AG04450 (cell line): ENCODE measurements at regions of chr15 and their contacts with region 1.

Region 1: DNA sequence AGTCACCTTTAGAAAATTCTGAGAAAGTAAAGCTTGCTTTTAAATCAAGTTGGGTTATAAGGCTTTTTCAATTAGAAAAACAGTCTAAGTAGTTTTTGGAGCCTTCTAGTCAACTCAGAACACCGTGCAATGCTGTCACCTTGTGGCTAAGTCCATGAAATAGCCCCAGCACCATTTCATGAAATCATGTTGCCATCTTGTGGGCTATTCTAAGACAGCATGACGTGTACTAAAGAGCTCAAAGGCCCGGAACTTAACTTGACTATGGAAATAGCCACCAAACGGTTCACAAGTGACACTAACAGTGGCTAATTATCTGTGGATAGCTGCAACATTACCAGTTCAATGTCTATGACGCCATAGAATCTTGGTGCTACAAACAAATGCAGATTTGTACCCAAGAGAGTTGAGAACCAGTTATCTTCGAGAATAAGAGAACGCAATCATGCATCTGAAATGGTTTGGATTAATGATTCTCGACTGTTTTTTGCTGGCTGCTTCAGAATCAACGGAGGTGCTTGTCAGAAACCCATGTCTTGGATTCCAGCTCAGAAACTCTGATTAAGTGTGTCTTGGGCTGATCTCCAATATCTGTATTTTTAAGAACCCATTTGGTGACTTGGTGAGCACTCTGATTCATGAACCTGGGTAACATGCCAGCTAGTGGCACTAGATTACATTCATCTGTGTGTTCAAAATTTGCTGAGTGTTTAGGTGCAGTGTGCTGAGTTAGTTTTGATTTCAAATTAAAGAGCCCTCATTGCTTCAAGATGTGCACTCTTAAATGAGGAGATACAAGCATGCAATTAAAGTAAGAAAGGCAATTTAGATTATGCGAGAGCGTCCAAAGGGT is 111.2 kb upstream of the MCTP2 start:
- DNase-seq: peak; percentile 84
- H3K4me3 ChIP-seq: no peak overlapping the region
- H3K27ac ChIP-seq: no peak overlapping the region
- H3K27me3 ChIP-seq: no peaks in the 10 kb centered on the region
- CTCF ChIP-seq: peak; percentile 100

Region 2: DNA sequence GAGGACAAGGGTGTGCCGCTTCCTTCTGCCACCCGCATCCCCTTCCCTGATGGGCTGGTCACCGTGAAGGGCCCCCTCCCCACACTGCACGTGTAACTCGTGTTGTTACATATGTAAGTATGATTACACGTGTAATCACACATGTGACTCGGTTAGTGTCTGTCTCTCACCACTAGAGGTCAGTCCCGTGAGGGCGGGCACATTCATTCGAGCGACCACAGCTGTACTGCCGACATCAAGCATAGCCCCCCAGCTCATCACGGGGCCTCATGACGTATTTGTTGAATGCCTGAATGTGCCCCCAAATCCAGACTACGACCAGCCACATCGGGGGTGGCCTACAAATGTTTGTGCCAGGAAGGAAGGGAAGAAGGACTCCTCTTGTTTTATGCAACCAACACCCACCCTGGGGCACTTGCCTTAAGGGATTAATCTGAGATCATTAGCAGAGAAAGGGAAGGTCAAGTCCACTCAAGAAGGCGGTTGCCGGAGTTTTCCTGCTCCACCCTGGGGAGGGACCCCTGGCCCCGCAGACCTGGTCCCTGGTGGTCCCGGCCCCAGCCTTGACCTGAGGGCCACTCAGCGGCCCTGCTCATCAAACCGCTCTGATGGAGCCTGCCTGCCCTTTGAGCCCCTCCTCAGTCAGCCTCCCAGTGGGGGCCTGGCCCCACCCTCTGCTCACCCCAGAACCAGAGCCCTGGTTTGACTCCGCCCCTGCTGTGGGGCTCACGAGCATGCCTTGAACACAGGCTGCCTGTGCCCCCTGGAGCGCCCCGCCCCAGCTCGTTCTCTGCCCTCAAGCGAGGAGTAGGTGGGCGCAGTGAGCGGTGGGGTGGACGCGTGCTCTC is 1084.0 kb before region 1 on chr15:
- CTCF ChIA-PET with region 1: interaction called, 75 read pairs
- POLR2A ChIA-PET with region 1: interaction called, 3 read pairs
- DNase-seq: no peak
- H3K4me3 ChIP-seq: no peak overlapping the region
- H3K27ac ChIP-seq: no peak overlapping the region
- H3K27me3 ChIP-seq: no peaks in the 10 kb centered on the region
- CTCF ChIP-seq: peak; percentile 59

Region 3: GRCh38 chr15:93982226-93982727 is 137.9 kb before region 1 on chr15:
- CTCF ChIA-PET with region 1: interaction called, 44 read pairs
- POLR2A ChIA-PET with region 1: no interaction called
- DNase-seq: no peak
- H3K4me3 ChIP-seq: no peak overlapping the region
- H3K27ac ChIP-seq: no peak overlapping the region
- H3K27me3 ChIP-seq: peaks cover 2% of the 10 kb centered on the region
- CTCF ChIP-seq: no peak

Region 4: DNA sequence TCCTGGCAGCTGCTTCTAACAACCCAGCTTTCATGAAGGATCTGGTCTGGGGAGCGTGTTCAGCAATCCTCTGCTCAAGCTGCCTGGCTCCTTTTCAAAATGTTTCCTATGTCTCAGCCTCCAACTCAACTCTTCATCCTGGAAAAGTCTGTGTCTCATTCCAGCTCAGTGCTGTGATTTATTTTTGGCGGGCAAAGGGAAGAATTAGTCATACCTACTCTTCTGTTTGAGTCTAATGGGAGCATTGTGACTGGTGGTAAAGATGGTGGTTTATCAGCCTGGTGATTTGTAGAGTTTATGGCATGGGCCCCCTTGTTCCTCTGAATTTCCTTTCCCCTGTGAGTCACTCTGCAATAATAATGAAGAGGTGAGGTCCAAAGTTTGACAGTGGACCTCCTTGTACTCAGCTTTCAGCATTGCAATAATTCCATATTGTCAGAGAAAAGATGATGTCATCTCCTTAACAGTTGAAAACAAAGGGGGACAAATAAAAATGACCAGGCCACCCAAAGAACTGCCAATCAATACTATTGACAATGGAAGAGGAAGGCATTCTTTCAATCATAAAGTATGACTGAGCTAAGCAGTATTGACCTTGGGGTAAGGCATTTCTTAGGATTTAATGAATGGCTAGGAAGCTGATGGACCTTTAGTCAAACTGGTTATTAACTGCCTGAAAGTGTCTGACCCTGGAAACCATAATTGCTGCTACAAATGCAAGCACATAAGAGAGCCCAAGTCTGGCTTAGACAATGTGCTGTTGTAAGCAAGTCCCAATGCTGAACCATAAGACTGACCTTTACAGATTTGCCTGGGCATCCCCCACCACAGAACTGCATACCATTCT is 93.5 kb before region 1 on chr15:
- CTCF ChIA-PET with region 1: interaction called, 22 read pairs
- POLR2A ChIA-PET with region 1: interaction called, 3 read pairs
- DNase-seq: peak; percentile 38
- H3K4me3 ChIP-seq: no peak overlapping the region
- H3K27ac ChIP-seq: no peak overlapping the region
- H3K27me3 ChIP-seq: no peaks in the 10 kb centered on the region
- CTCF ChIP-seq: no peak

Region 5: DNA sequence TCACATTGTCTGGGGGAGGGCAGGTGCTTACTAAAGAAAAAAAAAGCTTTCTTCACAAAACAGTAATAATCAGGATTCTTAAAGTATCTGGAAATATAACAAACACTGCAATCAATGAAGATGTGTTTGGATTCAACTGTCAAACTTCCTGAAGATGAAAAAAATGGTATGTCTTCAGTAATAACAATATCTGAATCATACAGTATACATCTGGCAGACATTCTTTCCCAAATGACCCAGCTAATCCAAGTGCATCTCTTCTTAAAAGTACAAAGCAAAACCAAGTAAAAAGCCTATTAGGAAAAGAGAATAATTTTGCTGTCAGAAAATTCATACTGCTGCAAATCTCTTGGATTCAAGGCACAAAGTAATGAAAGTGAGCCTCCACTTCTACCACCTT is 33.8 kb before region 1 on chr15:
- CTCF ChIA-PET with region 1: interaction called, 27 read pairs
- POLR2A ChIA-PET with region 1: no interaction called
- DNase-seq: peak; percentile 32
- H3K4me3 ChIP-seq: no peak overlapping the region
- H3K27ac ChIP-seq: peak overlapping the region; percentile 22
- H3K27me3 ChIP-seq: no peaks in the 10 kb centered on the region
- CTCF ChIP-seq: no peak

Region 6: DNA sequence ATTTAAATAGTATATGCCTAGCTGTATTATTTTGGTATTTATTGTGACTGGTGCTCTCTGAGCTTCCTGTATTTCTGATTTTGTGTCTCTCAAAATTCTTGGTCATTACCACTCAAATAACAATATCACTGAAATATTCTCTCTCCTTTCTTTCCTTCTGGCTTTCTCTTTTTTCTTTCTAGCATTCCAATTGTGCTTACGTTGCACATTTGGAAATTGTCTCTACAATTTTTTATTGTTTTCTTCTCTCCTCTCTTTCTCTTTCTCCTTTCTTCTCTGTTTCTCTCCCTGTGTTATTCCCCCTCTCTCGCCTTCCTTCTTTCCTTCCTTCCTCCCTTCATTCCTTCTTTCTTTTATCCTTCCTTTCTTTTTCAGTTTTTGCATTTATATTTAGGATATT is 21.7 kb after region 1 on chr15:
- CTCF ChIA-PET with region 1: interaction called, 17 read pairs
- POLR2A ChIA-PET with region 1: no interaction called
- DNase-seq: no peak
- H3K4me3 ChIP-seq: no peak overlapping the region
- H3K27ac ChIP-seq: no peak overlapping the region
- H3K27me3 ChIP-seq: peaks cover 15% of the 10 kb centered on the region
- CTCF ChIP-seq: no peak

Region 7: DNA sequence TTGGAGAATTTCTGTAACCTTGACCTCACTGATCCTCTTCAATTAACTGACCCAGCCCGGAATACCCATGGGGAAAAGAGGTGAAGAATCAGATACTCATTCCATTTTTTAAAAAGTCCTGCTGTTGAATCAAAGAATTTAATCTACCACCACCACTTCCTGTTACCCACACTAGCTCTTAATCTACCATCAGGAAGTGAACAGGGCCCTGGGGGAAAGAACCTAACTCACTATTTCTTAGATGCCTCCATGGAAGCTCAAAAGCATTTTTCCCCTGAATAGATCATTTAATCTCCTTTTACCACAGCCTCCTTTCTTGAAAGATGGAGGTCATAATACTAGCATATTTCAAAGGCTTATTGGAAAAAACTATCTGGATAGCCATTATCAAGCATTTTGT is 654.7 kb after region 1 on chr15:
- CTCF ChIA-PET with region 1: no interaction called
- POLR2A ChIA-PET with region 1: no interaction called
- DNase-seq: no peak
- H3K4me3 ChIP-seq: no peak overlapping the region
- H3K27ac ChIP-seq: no peak overlapping the region
- H3K27me3 ChIP-seq: no peaks in the 10 kb centered on the region
- CTCF ChIP-seq: no peak